Endothelial cell of umbilical vein (primary cell): ENCODE measurements at regions of chr2 and their contacts with region 1.

Region 1: GRCh38 chr2:28392297-28393113 is at the start of gene FOSL2:
- DNase-seq: peak; percentile 100
- H3K4me3 ChIP-seq: peak within 1 kb of the TSS; percentile 77 to 97 (median 90)
- H3K27ac ChIP-seq: peak within 1 kb of the TSS; percentile 95
- H3K4me1 ChIP-seq: peaks cover 31% of the 10 kb centered on the region
- H3K27me3 ChIP-seq: no peaks in the 10 kb centered on the region
- CTCF ChIP-seq: no peak
- POLR2A ChIP-seq: peak; percentile 90
- total RNA-seq, gene FOSL2: 83.7 and 85.3 TPM in 2 replicates

Region 2: GRCh38 chr2:27683390-27684071 is 709.0 kb before region 1 on chr2:
- CTCF ChIA-PET with region 1: interaction called, 10 read pairs
- POLR2A ChIA-PET with region 1: no interaction called
- dilution Hi-C with region 1: no loop called
- intact Hi-C with region 1: no loop called
- DNase-seq: peak; percentile 91
- H3K4me3 ChIP-seq: no peak overlapping the region
- H3K27ac ChIP-seq: peak overlapping the region; percentile 97
- H3K4me1 ChIP-seq: peaks cover 25% of the 10 kb centered on the region
- H3K27me3 ChIP-seq: no peaks in the 10 kb centered on the region
- CTCF ChIP-seq: peak; percentile 89 to 99
- POLR2A ChIP-seq: no peak

Region 3: GRCh38 chr2:27754138-27754588 is 638.3 kb before region 1 on chr2:
- CTCF ChIA-PET with region 1: interaction called, 13 read pairs
- POLR2A ChIA-PET with region 1: no interaction called
- dilution Hi-C with region 1: no loop called
- intact Hi-C with region 1: loop called (anchors 1 kb)
- DNase-seq: peak; percentile 81
- H3K4me3 ChIP-seq: no peak overlapping the region
- H3K27ac ChIP-seq: no peak overlapping the region
- H3K4me1 ChIP-seq: no peaks in the 10 kb centered on the region
- H3K27me3 ChIP-seq: no peaks in the 10 kb centered on the region
- CTCF ChIP-seq: peak; percentile 94 to 97
- POLR2A ChIP-seq: no peak

Region 4: DNA sequence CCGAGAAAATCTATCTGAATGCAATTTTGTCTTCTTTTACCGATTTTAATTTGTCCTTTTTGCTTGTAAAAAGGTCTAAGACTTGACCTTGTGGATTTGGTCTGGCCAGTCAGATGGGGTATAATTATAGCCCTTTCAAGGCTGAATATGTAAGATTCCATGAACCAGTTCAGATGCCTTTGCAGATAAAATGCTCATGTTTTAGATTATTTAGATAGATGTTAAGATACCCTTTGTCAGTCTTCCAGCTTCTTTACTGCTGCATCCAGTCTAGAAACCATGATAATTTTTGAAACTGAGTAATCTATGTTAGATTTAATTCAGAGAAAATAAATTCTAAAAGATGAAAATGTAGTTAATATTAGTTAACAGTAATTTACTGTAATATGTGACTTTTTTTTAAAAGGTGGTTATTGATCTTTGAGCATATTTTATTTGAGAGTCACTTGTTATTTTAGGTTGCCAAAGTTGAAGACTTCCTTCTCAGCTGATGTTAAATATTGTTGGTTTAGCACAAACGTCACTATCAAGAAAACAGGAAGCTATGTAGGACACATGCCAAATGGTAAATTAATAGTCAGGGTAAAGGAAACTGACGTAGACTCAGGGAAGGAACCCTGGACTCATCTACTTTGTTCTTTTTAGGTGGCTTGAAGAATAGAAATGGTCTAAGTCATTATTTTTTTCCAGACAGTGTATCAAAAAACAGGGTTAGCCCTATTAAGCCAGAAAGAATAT is 472.2 kb before region 1 on chr2:
- CTCF ChIA-PET with region 1: no interaction called
- POLR2A ChIA-PET with region 1: no interaction called
- dilution Hi-C with region 1: no loop called
- intact Hi-C with region 1: loop called (anchors 1 kb)
- DNase-seq: peak; percentile 95
- H3K4me3 ChIP-seq: peak overlapping the region in 1 of 3 experiments; percentile 14
- H3K27ac ChIP-seq: peak overlapping the region; percentile 96
- H3K4me1 ChIP-seq: peaks cover 17% of the 10 kb centered on the region
- H3K27me3 ChIP-seq: no peaks in the 10 kb centered on the region
- CTCF ChIP-seq: no peak
- POLR2A ChIP-seq: no peak

Region 5: GRCh38 chr2:28074137-28074536 is 318.4 kb before region 1 on chr2:
- CTCF ChIA-PET with region 1: no interaction called
- POLR2A ChIA-PET with region 1: no interaction called
- dilution Hi-C with region 1: no loop called
- intact Hi-C with region 1: no loop called
- DNase-seq: no peak
- H3K4me3 ChIP-seq: no peak overlapping the region
- H3K27ac ChIP-seq: no peak overlapping the region
- H3K4me1 ChIP-seq: no peaks in the 10 kb centered on the region
- H3K27me3 ChIP-seq: no peaks in the 10 kb centered on the region
- CTCF ChIP-seq: no peak
- POLR2A ChIP-seq: no peak

Region 6: DNA sequence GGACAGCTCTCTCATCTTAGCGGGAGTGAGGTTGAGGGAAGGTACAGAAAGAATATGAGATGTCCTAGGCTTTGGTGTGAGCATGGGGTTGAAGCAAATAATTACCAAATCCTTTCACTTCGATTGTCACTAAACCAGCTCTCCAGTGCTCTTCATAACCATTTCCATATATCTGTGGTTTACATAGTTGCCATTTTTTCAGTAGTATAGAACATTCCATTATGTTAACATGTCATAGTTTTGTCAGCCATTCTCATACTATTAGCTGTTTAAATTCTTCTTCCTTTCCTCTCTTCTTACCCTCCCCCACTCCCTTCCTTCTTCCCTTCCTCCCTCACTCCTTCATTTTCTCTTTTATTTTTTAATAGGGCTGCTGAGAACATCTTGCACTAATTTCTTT is 296.1 kb before region 1 on chr2:
- CTCF ChIA-PET with region 1: no interaction called
- POLR2A ChIA-PET with region 1: no interaction called
- dilution Hi-C with region 1: no loop called
- intact Hi-C with region 1: loop called (anchors 1 kb)
- DNase-seq: no peak
- H3K4me3 ChIP-seq: no peak overlapping the region
- H3K27ac ChIP-seq: no peak overlapping the region
- H3K4me1 ChIP-seq: peaks cover 15% of the 10 kb centered on the region
- H3K27me3 ChIP-seq: no peaks in the 10 kb centered on the region
- CTCF ChIP-seq: no peak
- POLR2A ChIP-seq: no peak

Region 7: GRCh38 chr2:28117104-28117596 is 275.4 kb before region 1 on chr2:
- CTCF ChIA-PET with region 1: no interaction called
- POLR2A ChIA-PET with region 1: no interaction called
- dilution Hi-C with region 1: no loop called
- intact Hi-C with region 1: no loop called
- DNase-seq: no peak
- H3K4me3 ChIP-seq: no peak overlapping the region
- H3K27ac ChIP-seq: no peak overlapping the region
- H3K4me1 ChIP-seq: no peaks in the 10 kb centered on the region
- H3K27me3 ChIP-seq: no peaks in the 10 kb centered on the region
- CTCF ChIP-seq: no peak
- POLR2A ChIP-seq: no peak

Region 8: GRCh38 chr2:28233164-28233676 is 159.3 kb before region 1 on chr2:
- CTCF ChIA-PET with region 1: no interaction called
- POLR2A ChIA-PET with region 1: no interaction called
- dilution Hi-C with region 1: no loop called
- intact Hi-C with region 1: no loop called
- DNase-seq: no peak
- H3K4me3 ChIP-seq: no peak overlapping the region
- H3K27ac ChIP-seq: no peak overlapping the region
- H3K4me1 ChIP-seq: no peaks in the 10 kb centered on the region
- H3K27me3 ChIP-seq: no peaks in the 10 kb centered on the region
- CTCF ChIP-seq: no peak
- POLR2A ChIP-seq: no peak

Region 9: DNA sequence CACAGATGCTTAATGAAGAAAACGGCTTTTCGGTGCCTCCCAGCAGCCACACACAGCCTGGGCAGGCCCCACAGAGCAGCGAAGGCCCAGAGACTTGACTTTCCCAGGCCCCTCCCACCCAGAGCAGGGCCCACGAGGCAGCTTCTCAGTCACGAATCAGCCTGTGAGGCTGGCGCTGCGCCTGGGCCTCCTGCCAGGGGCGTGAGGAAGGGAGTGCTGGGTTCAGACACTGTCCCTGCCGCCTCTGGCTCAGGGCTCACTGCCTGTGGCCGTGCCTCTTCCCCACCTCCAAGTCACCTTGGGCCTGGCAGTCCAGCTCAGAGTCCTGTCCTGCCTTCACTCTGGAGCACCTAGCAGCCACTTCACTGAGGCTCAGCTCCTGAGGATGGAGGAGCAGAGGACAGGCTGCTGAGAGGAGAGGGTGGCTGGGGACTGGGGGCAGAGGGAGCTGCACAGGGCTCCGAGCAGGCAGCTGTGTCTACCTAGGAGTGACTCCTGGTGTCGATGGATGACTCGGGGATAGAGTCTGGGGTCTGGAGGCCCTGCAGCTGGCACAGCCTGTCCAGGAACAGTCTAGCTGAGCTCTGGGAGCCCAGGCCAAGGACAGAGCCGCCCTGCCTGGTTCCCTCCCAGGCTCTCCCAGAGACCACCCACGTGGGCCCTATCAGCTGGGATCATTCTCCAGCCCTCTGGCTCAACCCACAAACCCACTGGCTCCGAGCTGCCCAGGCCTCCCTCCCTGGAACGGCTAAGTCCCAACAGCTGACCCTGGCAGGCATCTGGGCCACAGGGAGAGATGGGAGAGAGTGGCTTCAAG is 36.2 kb before region 1 on chr2:
- CTCF ChIA-PET with region 1: interaction called, 10 read pairs
- POLR2A ChIA-PET with region 1: interaction called, 4 read pairs
- dilution Hi-C with region 1: no loop called
- intact Hi-C with region 1: loop called (anchors 1 kb)
- DNase-seq: peak; percentile 89
- H3K4me3 ChIP-seq: no peak overlapping the region
- H3K27ac ChIP-seq: peak overlapping the region; percentile 80
- H3K4me1 ChIP-seq: peaks cover 37% of the 10 kb centered on the region
- H3K27me3 ChIP-seq: no peaks in the 10 kb centered on the region
- CTCF ChIP-seq: no peak
- POLR2A ChIP-seq: no peak

Region 10: GRCh38 chr2:28430377-28430765 is 37.9 kb after region 1 on chr2:
- CTCF ChIA-PET with region 1: no interaction called
- POLR2A ChIA-PET with region 1: no interaction called
- dilution Hi-C with region 1: no loop called
- intact Hi-C with region 1: no loop called
- DNase-seq: no peak
- H3K4me3 ChIP-seq: no peak overlapping the region
- H3K27ac ChIP-seq: no peak overlapping the region
- H3K4me1 ChIP-seq: no peaks in the 10 kb centered on the region
- H3K27me3 ChIP-seq: no peaks in the 10 kb centered on the region
- CTCF ChIP-seq: no peak
- POLR2A ChIP-seq: no peak